Endothelial cell of umbilical vein (primary cell): ENCODE measurements at regions of chr6 and their contacts with region 1.

Region 1: DNA sequence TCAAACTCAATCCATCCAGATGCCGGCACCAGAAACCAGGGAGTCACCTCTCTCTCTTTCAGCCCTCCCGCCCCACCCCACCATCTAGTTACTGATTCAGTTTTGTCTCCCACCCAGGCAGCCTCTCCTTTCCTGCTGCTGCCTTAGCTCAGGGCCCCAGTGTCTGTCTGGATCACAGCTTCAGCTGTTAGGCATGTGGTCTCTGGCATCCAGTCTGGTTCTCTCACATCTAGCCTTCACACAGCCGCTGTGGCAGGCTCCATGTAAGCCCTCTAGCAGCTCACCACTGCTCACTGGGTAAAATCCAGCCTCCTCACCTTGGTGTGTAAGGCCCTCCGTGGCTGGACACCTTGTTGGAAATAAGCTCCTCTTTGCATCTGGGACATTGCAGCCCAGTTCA is 21.3 kb downstream of the AARS2 start:
- DNase-seq: no peak
- H3K4me3 ChIP-seq: no peak overlapping the region
- H3K27ac ChIP-seq: no peak overlapping the region
- H3K4me1 ChIP-seq: no peaks in the 10 kb centered on the region
- H3K27me3 ChIP-seq: peaks cover 30% of the 10 kb centered on the region in 2 experiments
- CTCF ChIP-seq: no peak
- POLR2A ChIP-seq: no peak

Region 2: GRCh38 chr6:44143731-44144130 is 148.1 kb before region 1 on chr6:
- CTCF ChIA-PET with region 1: no interaction called
- POLR2A ChIA-PET with region 1: interaction called, 12 read pairs
- dilution Hi-C with region 1: no loop called
- intact Hi-C with region 1: no loop called
- DNase-seq: no peak
- H3K4me3 ChIP-seq: no peak overlapping the region
- H3K27ac ChIP-seq: no peak overlapping the region
- H3K4me1 ChIP-seq: no peaks in the 10 kb centered on the region
- H3K27me3 ChIP-seq: no peaks in the 10 kb centered on the region
- CTCF ChIP-seq: no peak
- POLR2A ChIP-seq: no peak

Region 3: GRCh38 chr6:44312901-44313788 is 21.3 kb after region 1 on chr6 and contains the start of gene AARS2:
- CTCF ChIA-PET with region 1: interaction called, 14 read pairs
- POLR2A ChIA-PET with region 1: no interaction called
- dilution Hi-C with region 1: no loop called
- intact Hi-C with region 1: no loop called
- DNase-seq: peak; percentile 85
- H3K4me3 ChIP-seq: peak within 1 kb of the TSS; percentile 87 to 97 (median 92)
- H3K27ac ChIP-seq: peak within 1 kb of the TSS; percentile 49
- H3K4me1 ChIP-seq: peaks cover 7% of the 10 kb centered on the region
- H3K27me3 ChIP-seq: peaks cover 5 to 6% of the 10 kb centered on the region in 2 experiments
- CTCF ChIP-seq: peak; percentile 99
- POLR2A ChIP-seq: peak; percentile 83
- total RNA-seq, gene AARS2: 17.9 and 18.0 TPM in 2 replicates

Region 4: GRCh38 chr6:44327096-44327495 is 35.3 kb after region 1 on chr6:
- CTCF ChIA-PET with region 1: no interaction called
- POLR2A ChIA-PET with region 1: no interaction called
- dilution Hi-C with region 1: no loop called
- intact Hi-C with region 1: no loop called
- DNase-seq: no peak
- H3K4me3 ChIP-seq: no peak overlapping the region
- H3K27ac ChIP-seq: no peak overlapping the region
- H3K4me1 ChIP-seq: no peaks in the 10 kb centered on the region
- H3K27me3 ChIP-seq: peaks cover 22 to 34% of the 10 kb centered on the region in 2 experiments
- CTCF ChIP-seq: no peak
- POLR2A ChIP-seq: no peak